ENCODE measurements at regions of chr10 and their contacts with region 1.

Region 1: GRCh38 chr10:95601116-95601719 is 40.0 kb upstream of the SORBS1 start:
- DNase-seq: no peak
- H3K4me3 ChIP-seq: no peak overlapping the region
- H3K27ac ChIP-seq: peak overlapping the region in 3 of 4 donors; percentile 49 to 81 (median 51)
- H3K4me1 ChIP-seq: peaks cover 0 to 4% (median 0%) of the 10 kb centered on the region in 3 donors
- H3K27me3 ChIP-seq: no peaks in the 10 kb centered on the region
- CTCF ChIP-seq: peak; percentile 76 to 95 (median 89)
- POLR2A ChIP-seq: no peak

Region 2: DNA sequence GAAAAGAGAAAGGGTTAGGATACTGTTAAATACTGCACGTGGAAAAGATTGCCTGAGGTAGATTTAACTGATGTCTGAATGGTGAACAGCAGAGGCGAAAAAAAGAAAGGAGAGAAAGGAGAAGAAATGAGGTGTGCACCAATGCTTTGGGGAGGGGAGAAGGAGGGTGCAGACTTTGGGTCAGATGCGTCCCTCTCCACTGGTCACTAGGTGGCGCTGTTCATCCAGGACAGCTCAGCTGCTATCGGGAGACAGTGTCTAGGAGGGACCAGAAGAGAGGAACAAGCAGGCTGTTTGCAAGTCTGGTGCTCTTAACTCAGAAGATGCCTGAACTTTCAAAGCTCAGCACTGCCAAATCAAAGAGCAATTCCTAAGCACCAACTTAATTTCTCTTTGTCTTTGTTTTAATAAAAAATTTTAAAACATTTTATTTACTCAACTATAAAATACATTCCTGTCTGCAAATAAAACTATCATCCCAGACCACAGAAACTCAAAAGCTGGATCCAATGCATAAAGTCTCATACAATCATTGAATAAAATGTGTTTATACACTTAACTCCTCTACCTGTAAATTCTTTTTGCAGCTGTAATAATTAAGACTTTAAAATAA is 226.5 kb before region 1 on chr10:
- intact Hi-C with region 1: loop called (anchors 5 kb)
- DNase-seq: no peak
- H3K4me3 ChIP-seq: no peak overlapping the region
- H3K27ac ChIP-seq: peak overlapping the region in 1 of 4 donors; percentile 29
- H3K4me1 ChIP-seq: peaks cover 0 to 20% (median 9%) of the 10 kb centered on the region in 3 donors
- H3K27me3 ChIP-seq: no peaks in the 10 kb centered on the region
- CTCF ChIP-seq: peak; percentile 43 to 94 (median 88)
- POLR2A ChIP-seq: no peak

Region 3: DNA sequence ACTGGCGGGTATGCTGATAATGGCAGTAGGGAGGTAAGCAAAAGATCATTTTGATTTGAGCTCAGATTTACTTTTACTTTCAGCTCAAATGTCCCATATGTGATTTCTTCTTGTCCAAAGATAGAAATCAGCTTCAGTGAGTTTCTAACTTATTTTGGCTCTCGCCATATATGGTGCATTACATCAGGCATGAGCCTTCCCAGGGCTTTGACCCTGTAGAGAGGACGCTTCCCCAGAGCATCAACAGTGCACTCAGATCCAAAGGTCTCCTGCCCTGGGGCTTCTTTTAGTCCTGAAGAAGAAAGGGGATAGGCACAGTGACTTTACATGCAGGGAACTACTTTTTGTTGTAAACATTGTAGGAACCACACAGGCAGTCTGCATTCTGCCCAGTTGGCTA is 181.8 kb before region 1 on chr10:
- intact Hi-C with region 1: no loop called
- DNase-seq: no peak
- H3K4me3 ChIP-seq: no peak overlapping the region
- H3K27ac ChIP-seq: peak overlapping the region in 3 of 4 donors; percentile 25 to 90 (median 65)
- H3K4me1 ChIP-seq: peaks cover 7 to 78% (median 20%) of the 10 kb centered on the region in 3 donors
- H3K27me3 ChIP-seq: no peaks in the 10 kb centered on the region
- CTCF ChIP-seq: no peak
- POLR2A ChIP-seq: no peak

Region 4: DNA sequence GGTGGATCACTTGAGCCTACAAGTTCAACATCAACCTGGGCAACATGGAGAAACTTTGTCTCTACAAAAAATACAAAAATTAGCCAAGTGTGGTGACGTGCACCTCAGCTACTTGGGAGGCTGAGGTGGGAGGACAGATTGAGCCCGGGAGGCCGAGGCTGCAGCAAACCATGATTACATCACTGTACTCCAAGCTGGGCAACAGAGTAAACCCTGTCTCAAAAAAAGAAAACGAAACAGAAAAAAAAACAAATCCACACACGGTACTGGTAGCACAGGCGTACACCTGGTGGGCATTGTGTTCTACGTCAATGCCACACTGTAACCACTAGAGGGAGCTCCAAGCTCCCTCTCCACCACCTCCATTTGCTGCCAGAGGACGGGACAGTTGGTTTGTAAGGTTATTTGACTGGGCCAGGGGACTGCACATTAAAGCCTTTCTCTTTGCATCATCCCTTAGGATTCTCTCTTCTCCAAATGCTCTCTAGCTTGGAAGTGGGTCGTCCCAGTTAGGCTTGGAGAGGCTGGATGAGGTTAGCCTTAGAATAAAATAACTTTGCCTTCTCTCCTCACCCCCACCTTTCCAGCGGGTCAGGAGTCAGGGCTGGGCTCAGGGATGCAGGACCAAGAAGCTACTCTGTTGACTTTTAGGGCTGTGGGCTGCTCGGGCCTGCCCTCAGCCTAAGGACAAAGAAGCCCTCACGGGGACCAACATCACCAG is 170.8 kb before region 1 on chr10:
- intact Hi-C with region 1: loop called (anchors 5 kb)
- DNase-seq: no peak
- H3K4me3 ChIP-seq: no peak overlapping the region
- H3K27ac ChIP-seq: peak overlapping the region; percentile 56 to 87 (median 74)
- H3K4me1 ChIP-seq: peaks cover 0 to 97% (median 38%) of the 10 kb centered on the region in 3 donors
- H3K27me3 ChIP-seq: no peaks in the 10 kb centered on the region
- CTCF ChIP-seq: peak; percentile 89 to 96 (median 93)
- POLR2A ChIP-seq: no peak

Measured in esophagus squamous epithelium (tissue), 5 donors.